Activated CD4-positive, alpha-beta T cell treated with anti-CD3 and anti-CD28 coated beads, Interleukin-2, amount 10 ng/mL, durations not matched to agents 24 days and 14 days (primary cell): ENCODE measurements at regions of chr4 and their contacts with region 1.

Region 1: GRCh38 chr4:140095694-140096482 is 58.1 kb downstream of the MAML3 start:
- DNase-seq: peak; percentile 88
- H3K4me3 Mint-ChIP-seq: peak overlapping the region; percentile 86
- H3K27ac Mint-ChIP-seq: peak overlapping the region; percentile 94
- H3K4me1 Mint-ChIP-seq: peaks cover 72% of the 10 kb centered on the region
- H3K27me3 Mint-ChIP-seq: peaks cover 4% of the 10 kb centered on the region

Region 2: DNA sequence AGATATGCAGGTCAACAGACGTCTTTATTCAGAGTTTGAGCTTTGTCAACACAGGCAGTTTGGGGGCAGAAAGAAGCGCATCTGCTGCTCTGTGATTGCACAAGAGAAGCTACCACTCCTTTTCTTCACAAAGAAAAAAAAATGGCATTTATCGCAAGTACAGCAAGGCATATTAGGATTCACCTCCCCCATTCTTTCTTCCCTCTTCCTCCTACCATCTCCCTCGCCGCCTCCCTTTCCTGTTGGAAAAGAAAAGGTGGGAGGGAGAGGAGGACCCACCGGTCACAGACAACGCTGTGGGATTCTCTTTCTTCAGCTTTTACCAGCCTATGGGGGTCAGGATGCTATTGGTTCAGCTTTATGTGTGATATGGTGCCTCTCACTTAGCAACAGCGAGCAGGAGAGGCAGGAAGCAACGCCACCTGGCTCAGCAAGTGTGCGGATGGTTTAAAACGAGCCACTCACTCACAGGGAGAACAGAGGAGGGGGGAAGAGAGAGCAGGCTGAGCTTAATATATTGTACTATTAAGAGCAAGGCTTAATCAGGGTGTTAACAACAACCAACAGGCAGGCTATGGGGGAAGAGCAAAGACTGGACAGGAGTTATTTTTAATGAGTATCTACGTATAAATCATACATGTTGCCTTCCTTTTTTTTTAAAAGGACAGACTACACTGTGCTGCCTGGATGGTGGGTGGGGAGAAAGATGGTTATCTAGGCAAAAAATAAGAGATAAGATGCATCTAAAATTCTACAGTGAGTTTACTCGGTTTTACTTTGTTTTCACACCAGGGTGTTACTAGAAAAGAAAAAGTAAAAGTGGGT is 46.7 kb before region 1 on chr4:
- intact Hi-C with region 1: loop called (anchors 2 kb)
- DNase-seq: peak; percentile 81
- H3K4me3 Mint-ChIP-seq: peak overlapping the region; percentile 67
- H3K27ac Mint-ChIP-seq: peak overlapping the region; percentile 56
- H3K4me1 Mint-ChIP-seq: peaks cover 28% of the 10 kb centered on the region
- H3K27me3 Mint-ChIP-seq: peaks cover 55% of the 10 kb centered on the region

Region 3: GRCh38 chr4:140061194-140061593 is 34.7 kb before region 1 on chr4:
- intact Hi-C with region 1: loop called (anchors 5 kb)
- DNase-seq: no peak
- H3K4me3 Mint-ChIP-seq: no peak overlapping the region
- H3K27ac Mint-ChIP-seq: no peak overlapping the region
- H3K4me1 Mint-ChIP-seq: peaks cover 8% of the 10 kb centered on the region
- H3K27me3 Mint-ChIP-seq: peaks cover 66% of the 10 kb centered on the region

Region 4: DNA sequence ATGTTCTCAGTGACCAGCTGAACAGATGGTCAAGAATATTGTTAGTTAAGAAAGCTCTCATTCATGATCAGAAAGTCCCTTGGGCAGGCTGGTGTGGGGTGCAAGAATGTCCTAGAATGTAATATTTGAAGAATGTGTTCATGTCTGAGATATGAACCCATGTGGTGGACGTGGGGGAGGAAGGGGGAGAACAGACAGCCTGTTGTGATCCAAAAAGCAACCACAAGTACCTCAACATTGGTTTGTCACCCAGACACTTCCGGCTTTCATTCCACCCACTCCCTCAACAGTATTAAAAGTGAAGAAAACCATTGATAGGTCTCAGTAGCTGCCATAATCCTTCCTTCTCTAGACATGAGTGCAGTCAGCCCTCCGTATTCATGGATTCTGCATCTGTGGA is 24.1 kb before region 1 on chr4:
- intact Hi-C with region 1: loop called (anchors 1 kb)
- DNase-seq: peak; percentile 89
- H3K4me3 Mint-ChIP-seq: peak overlapping the region; percentile 73
- H3K27ac Mint-ChIP-seq: peak overlapping the region; percentile 83
- H3K4me1 Mint-ChIP-seq: peaks cover 44% of the 10 kb centered on the region
- H3K27me3 Mint-ChIP-seq: peaks cover 41% of the 10 kb centered on the region

Region 5: DNA sequence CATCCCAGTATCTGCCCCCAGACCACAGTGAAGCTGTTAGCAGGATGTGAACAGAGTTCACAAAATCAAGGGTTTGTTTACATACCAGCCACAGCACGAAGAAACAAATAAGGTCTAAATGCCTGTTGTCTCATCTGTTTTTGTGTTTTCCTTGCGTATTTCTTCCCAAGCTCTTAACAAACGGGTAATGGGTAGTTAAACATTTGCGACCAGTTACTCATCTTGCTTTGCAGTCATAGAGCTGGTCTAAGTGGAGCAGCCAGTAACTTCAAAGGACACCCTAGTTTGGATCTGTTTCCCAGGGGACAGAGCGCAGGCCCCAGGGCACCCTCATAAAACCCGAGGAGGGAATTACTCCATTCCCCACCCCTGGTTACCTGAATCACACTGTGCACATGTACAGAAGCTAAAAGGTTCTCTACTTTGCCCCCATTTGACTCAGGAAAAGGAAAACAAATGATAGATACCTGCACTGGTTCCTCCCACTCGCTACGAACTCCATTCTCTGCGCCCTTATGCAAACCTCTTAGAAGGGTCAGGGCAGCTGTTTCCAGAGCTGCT is 10.7 kb before region 1 on chr4:
- intact Hi-C with region 1: loop called (anchors 1 kb)
- DNase-seq: no peak
- H3K4me3 Mint-ChIP-seq: no peak overlapping the region
- H3K27ac Mint-ChIP-seq: no peak overlapping the region
- H3K4me1 Mint-ChIP-seq: peaks cover 7% of the 10 kb centered on the region
- H3K27me3 Mint-ChIP-seq: peaks cover 53% of the 10 kb centered on the region

Region 6: DNA sequence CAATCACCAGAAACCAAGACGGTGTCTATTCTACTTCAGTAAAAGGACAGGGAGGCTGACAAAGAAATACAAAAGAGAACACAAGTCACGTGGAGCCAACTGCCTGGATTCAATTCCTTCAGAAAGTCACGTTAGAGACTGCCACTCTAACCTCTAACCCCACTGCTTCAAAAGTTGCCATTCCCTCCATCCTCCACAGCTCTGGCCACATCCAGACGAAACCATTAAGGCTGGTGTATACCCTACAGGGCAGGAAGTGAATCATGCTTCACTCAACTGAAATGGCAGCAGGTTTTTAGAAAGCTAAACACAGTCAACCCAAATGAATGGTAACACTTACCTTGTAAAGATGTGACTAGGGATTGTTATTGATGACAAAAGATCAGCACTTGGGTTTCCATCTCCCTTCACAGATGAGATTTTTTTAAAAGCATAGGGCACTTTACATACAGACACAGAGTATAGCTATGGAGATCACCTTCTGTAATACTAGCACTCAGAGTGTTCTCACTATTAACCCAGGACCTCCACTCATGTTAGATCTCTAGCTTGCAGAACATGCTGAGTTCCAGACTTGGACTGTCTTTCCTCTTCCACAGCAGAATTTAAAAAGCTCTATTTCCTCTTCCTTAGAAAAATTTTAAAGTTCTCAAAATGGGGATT is 20.7 kb after region 1 on chr4:
- intact Hi-C with region 1: loop called (anchors 1 kb)
- DNase-seq: peak; percentile 80
- H3K4me3 Mint-ChIP-seq: peak overlapping the region; percentile 43
- H3K27ac Mint-ChIP-seq: peak overlapping the region; percentile 76
- H3K4me1 Mint-ChIP-seq: peaks cover 24% of the 10 kb centered on the region
- H3K27me3 Mint-ChIP-seq: peaks cover 19% of the 10 kb centered on the region

Region 7: GRCh38 chr4:140373328-140374129 is 277.6 kb after region 1 on chr4 and contains the start of gene SCOC:
- intact Hi-C with region 1: loop called (anchors 10 kb)
- DNase-seq: peak; percentile 99
- H3K4me3 Mint-ChIP-seq: no peak within 1 kb of the TSS
- H3K27ac Mint-ChIP-seq: peak within 1 kb of the TSS; percentile 65
- H3K4me1 Mint-ChIP-seq: peaks cover 24% of the 10 kb centered on the region
- H3K27me3 Mint-ChIP-seq: no peaks in the 10 kb centered on the region
- total RNA-seq, gene SCOC: 33.7 and 33.8 TPM in 2 replicates